ENCODE measurements at regions of chr11 and their contacts with region 1.

Region 1: DNA sequence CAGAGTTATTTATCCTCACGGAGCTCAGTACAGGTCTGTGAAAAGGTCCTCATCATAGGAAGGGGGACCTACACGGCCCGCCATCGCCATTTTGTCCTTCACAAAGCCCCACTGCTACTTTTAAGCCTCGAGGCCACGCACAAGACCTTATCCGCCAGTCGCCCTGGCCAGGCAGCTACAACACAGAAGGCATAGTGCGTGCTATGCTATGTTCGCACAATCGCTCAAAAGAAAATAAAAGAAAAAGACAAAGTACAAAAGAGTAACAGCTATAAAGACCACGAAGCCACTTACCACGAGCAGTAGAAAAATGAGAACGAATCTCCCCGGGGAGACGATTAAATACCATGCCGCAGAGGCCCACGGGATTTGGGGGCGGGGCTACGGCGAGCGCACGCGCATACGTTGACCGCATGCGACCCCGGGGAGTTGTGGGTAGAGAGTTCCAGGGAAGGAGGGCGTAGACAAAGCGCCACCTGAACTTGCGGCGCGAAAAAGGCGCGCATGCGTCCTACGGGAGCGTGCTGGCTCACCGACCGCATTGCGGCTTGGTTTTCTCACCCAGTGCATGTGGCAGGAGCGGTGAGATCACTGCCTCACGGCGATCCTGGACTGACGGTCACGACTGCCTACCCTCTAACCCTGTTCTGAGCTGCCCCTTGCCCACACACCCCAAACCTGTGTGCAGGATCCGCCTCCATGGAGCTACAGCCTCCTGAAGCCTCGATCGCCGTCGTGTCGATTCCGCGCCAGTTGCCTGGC is 16.4 kb upstream of the WDR74 start:
- DNase-seq: peak; percentile 97
- ATAC-seq: peak; percentile 79
- H3K4me3 ChIP-seq: peak overlapping the region; percentile 86 to 96 (median 94)
- H3K27ac ChIP-seq: peak overlapping the region; percentile 91
- H3K4me1 ChIP-seq: peaks cover 77% of the 10 kb centered on the region
- H3K27me3 ChIP-seq: no peaks in the 10 kb centered on the region; a peak in 1 of 5 replicates
- CTCF ChIP-seq: peak; percentile 23; the same call in 1 of the 2 replicates
- EP300 ChIP-seq: 0 out of 4 replicates have a peak, but pooled peaks of 1 of the 2 experiments have one; percentile 8
- POLR2A ChIP-seq: peak; percentile 99 to 100
- RAD21 ChIP-seq: peak; percentile 16; the same call in 1 of the 2 replicates

Region 2: GRCh38 chr11:62678770-62679696 is 176.7 kb before region 1 on chr11 and contains the start of gene UBXN1:
- CTCF ChIA-PET with region 1: no interaction called
- POLR2A ChIA-PET with region 1: interaction called, 10 read pairs
- in situ Hi-C with region 1: no loop called
- intact Hi-C with region 1: no loop called
- DNase-seq: peak; percentile 79
- ATAC-seq: peak; percentile 79
- H3K4me3 ChIP-seq: peak within 1 kb of the TSS; percentile 88 to 98 (median 94)
- H3K27ac ChIP-seq: peak within 1 kb of the TSS; percentile 86
- H3K4me1 ChIP-seq: peaks cover 37% of the 10 kb centered on the region
- H3K27me3 ChIP-seq: no peaks in the 10 kb centered on the region
- CTCF ChIP-seq: no peak
- EP300 ChIP-seq: no peak
- POLR2A ChIP-seq: peak; percentile 72 to 79
- RAD21 ChIP-seq: no peak; the same call in 1 of the 2 replicates
- total RNA-seq, gene UBXN1: 52.4 and 58.9 TPM in 2 replicates

Region 3: GRCh38 chr11:62771144-62772021 is 84.4 kb before region 1 on chr11 and contains the start of gene TAF6L:
- CTCF ChIA-PET with region 1: no interaction called
- POLR2A ChIA-PET with region 1: interaction called, 10 read pairs
- in situ Hi-C with region 1: no loop called
- intact Hi-C with region 1: no loop called
- DNase-seq: peak; percentile 97
- ATAC-seq: peak; percentile 93
- H3K4me3 ChIP-seq: peak within 1 kb of the TSS; percentile 64 to 78 (median 65)
- H3K27ac ChIP-seq: peak within 1 kb of the TSS; percentile 92
- H3K4me1 ChIP-seq: peaks cover 23% of the 10 kb centered on the region
- H3K27me3 ChIP-seq: no peaks in the 10 kb centered on the region; a peak in 1 of 5 replicates
- CTCF ChIP-seq: 0 out of 2 replicates have a peak, but pooled peaks have one; percentile 8
- EP300 ChIP-seq: no peak
- POLR2A ChIP-seq: peak; percentile 60 to 88; a peak in 3 of 4 replicates
- RAD21 ChIP-seq: no peak; the same call in 1 of the 2 replicates
- total RNA-seq, gene TAF6L: 13.4 and 19.4 TPM in 2 replicates

Region 4: GRCh38 chr11:62831520-62832335 is 24.0 kb before region 1 on chr11 and contains the start of gene STX5:
- CTCF ChIA-PET with region 1: no interaction called
- POLR2A ChIA-PET with region 1: interaction called, 60 read pairs
- in situ Hi-C with region 1: no loop called
- intact Hi-C with region 1: no loop called
- DNase-seq: peak; percentile 97
- ATAC-seq: peak; percentile 90
- H3K4me3 ChIP-seq: peak within 1 kb of the TSS; percentile 78 to 100 (median 99)
- H3K27ac ChIP-seq: peak within 1 kb of the TSS; percentile 95
- H3K4me1 ChIP-seq: peaks cover 32% of the 10 kb centered on the region
- H3K27me3 ChIP-seq: no peaks in the 10 kb centered on the region; a peak in 1 of 5 replicates
- CTCF ChIP-seq: no peak
- EP300 ChIP-seq: no peak
- POLR2A ChIP-seq: peak; percentile 79 to 88
- RAD21 ChIP-seq: no peak
- total RNA-seq, gene STX5: 26.9 and 29.2 TPM in 2 replicates

Region 5: DNA sequence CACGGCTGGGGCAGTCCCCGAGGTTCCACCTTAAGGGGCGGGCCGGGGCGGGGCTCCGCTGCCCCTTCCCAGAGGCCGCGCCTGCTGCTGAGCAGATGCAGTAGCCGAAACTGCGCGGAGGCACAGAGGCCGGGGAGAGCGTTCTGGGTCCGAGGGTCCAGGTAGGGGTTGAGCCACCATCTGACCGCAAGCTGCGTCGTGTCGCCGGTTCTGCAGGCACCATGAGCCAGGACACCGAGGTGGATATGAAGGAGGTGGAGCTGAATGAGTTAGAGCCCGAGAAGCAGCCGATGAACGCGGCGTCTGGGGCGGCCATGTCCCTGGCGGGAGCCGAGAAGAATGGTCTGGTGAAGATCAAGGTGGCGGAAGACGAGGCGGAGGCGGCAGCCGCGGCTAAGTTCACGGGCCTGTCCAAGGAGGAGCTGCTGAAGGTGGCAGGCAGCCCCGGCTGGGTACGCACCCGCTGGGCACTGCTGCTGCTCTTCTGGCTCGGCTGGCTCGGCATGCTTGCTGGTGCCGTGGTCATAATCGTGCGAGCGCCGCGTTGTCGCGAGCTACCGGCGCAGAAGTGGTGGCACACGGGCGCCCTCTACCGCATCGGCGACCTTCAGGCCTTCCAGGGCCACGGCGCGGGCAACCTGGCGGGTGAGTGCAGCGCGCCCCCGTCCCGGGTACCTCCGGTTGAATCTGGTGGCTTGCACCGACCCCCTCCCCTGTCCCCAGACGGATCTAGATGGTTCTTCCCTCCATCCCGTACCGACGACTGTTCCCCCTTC is 25.2 kb after region 1 on chr11 and contains the start of gene SLC3A2:
- CTCF ChIA-PET with region 1: no interaction called
- POLR2A ChIA-PET with region 1: interaction called, 45 read pairs
- in situ Hi-C with region 1: no loop called
- intact Hi-C with region 1: loop called (anchors 1 kb)
- DNase-seq: peak; percentile 74
- ATAC-seq: peak; percentile 91
- H3K4me3 ChIP-seq: peak within 1 kb of the TSS; percentile 92 to 99 (median 94)
- H3K27ac ChIP-seq: peak within 1 kb of the TSS; percentile 93
- H3K4me1 ChIP-seq: peaks cover 56% of the 10 kb centered on the region
- H3K27me3 ChIP-seq: no peaks in the 10 kb centered on the region; a peak in 1 of 5 replicates
- CTCF ChIP-seq: peak; percentile 94
- EP300 ChIP-seq: no peak
- POLR2A ChIP-seq: peak; percentile 96 to 98
- RAD21 ChIP-seq: peak; percentile 84
- total RNA-seq, gene SLC3A2: 94.8 and 213 TPM in 2 replicates